ENCODE measurements at regions of chr11 and their contacts with region 1.

Region 1: DNA sequence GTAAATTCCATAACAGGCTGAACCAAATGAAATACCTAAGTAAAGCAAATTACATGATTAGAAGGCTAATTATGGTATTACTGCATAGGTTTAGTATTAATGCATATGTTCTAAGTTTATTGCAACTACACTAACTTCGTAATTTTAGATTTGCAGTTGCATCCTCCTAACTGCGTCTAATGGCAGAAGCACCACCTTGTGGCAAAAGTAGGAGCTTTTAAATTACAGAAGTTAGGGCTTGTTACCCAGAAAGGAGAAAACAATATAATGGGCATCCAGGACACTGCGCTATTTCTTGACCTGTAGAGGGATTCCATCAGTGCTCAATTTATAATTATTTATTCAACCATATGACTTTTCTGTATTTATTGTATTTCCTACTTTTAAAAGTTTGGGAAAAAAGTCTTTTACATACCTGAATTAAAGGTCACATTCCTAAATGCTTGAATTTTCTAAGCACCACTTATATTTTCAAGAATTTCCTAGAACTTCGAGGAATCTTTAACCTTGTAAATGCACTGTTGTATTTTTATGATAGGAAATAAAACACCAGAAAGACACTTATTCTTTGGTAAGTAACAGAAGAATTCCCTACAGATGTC is 16.3 kb upstream of the GPR83 start:
- DNase-seq: no peak
- ATAC-seq: peak; percentile 54
- H3K4me3 ChIP-seq: no peak overlapping the region
- H3K27ac ChIP-seq: no peak overlapping the region
- H3K4me1 ChIP-seq: no peaks in the 10 kb centered on the region
- H3K27me3 ChIP-seq: no peaks in the 10 kb centered on the region
- CTCF ChIP-seq: peak in 2 of 3 experiments; percentile 24 to 25; a peak in 3 of 6 replicates
- EP300 ChIP-seq: no peak
- POLR2A ChIP-seq: no peak
- RAD21 ChIP-seq: peak; percentile 74

Region 2: GRCh38 chr11:93895106-93895862 is 522.2 kb before region 1 on chr11:
- CTCF ChIA-PET with region 1: interaction called, 7 read pairs
- POLR2A ChIA-PET with region 1: no interaction called
- RAD21 ChIA-PET with region 1: interaction called, 4 read pairs
- SMC1A ChIA-PET with region 1: no interaction called
- in situ Hi-C with region 1: no loop called
- intact Hi-C with region 1: loop called (anchors 10 kb)
- DNase-seq: no peak
- ATAC-seq: peak; percentile 82
- H3K4me3 ChIP-seq: no peak overlapping the region
- H3K27ac ChIP-seq: no peak overlapping the region
- H3K4me1 ChIP-seq: no peaks in the 10 kb centered on the region
- H3K27me3 ChIP-seq: no peaks in the 10 kb centered on the region
- CTCF ChIP-seq: peak; percentile 51 to 58 (median 56)
- EP300 ChIP-seq: no peak
- POLR2A ChIP-seq: no peak
- RAD21 ChIP-seq: peak; percentile 76

Region 3: DNA sequence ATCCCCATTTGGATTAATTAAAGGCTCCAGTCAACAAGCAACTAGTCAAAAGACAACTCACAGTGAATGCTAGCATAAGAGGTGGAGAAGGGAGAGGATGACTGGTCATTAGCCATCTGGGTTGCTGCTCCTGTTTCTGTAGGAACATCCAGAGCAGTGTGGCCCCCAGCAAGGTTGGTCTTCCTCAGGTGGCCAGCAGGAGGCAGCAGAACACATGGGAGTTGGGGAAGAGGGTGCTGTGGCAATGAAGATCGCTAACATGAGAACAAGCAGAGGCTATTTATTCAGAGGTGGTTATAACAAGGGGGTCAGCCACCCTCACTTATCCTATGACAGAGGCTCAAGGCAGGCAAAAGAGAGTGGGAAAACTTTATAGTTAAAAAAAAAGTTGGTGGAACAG is 91.8 kb before region 1 on chr11:
- CTCF ChIA-PET with region 1: interaction called, 13 read pairs
- POLR2A ChIA-PET with region 1: no interaction called
- RAD21 ChIA-PET with region 1: no interaction called
- SMC1A ChIA-PET with region 1: no interaction called
- in situ Hi-C with region 1: no loop called
- intact Hi-C with region 1: no loop called
- DNase-seq: peak; percentile 9
- ATAC-seq: peak; percentile 95
- H3K4me3 ChIP-seq: no peak overlapping the region
- H3K27ac ChIP-seq: no peak overlapping the region
- H3K4me1 ChIP-seq: no peaks in the 10 kb centered on the region
- H3K27me3 ChIP-seq: no peaks in the 10 kb centered on the region
- CTCF ChIP-seq: peak; percentile 76 to 83 (median 81)
- EP300 ChIP-seq: no peak
- POLR2A ChIP-seq: no peak
- RAD21 ChIP-seq: peak; percentile 86

Region 4: DNA sequence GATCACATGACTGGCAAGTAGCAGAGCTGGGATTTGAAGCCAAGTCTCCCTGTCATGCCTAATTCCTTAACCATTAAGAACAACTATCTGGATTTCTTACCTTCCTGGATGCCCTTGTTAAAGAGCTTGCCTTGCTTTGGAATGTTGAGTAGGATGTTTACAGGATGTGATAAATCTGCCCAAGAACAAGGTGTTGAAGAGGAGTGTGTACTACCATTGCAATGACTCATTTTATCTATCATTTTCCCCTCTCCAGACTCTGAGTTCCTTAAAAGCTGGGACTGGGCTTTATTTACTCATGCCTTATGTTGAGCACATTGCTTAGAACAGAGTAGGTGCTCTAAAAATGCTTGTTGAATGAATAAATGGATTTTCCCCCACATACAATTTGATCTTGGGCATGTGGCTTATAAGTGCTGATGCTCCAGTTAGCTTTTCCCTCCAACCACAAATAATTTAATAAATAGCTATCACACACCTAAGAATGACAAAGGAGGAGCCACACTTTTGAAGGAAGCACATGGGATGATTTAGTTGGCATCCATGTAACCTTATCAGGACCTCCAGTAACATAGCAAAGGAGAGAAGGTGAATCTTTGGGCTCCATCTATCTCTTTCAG is 1082.1 kb after region 1 on chr11:
- CTCF ChIA-PET with region 1: no interaction called
- POLR2A ChIA-PET with region 1: no interaction called
- RAD21 ChIA-PET with region 1: no interaction called
- SMC1A ChIA-PET with region 1: no interaction called
- in situ Hi-C with region 1: no loop called
- intact Hi-C with region 1: no loop called
- DNase-seq: no peak
- ATAC-seq: no peak
- H3K4me3 ChIP-seq: no peak overlapping the region
- H3K27ac ChIP-seq: no peak overlapping the region
- H3K4me1 ChIP-seq: no peaks in the 10 kb centered on the region
- H3K27me3 ChIP-seq: peaks cover 0 to 2% of the 10 kb centered on the region in 2 experiments; a peak in 2 of 4 replicates
- CTCF ChIP-seq: no peak
- EP300 ChIP-seq: no peak
- POLR2A ChIP-seq: no peak
- RAD21 ChIP-seq: no peak